ENCODE measurements at regions of chr22 and their contacts with region 1.

Region 1: GRCh38 chr22:24244101-24244787 is 638 bp downstream of the GGT5 start:
- DNase-seq: peak in 1 of 2 donors; percentile 23
- ATAC-seq: no peak

Region 2: GRCh38 chr22:24189249-24190158 is 54.7 kb before region 1 on chr22:
- intact Hi-C with region 1: loop called in 1 of 2 experiments (anchors 10 kb)
- DNase-seq: peak in 1 of 2 donors; percentile 78
- ATAC-seq: peak; percentile 92

Region 3: DNA sequence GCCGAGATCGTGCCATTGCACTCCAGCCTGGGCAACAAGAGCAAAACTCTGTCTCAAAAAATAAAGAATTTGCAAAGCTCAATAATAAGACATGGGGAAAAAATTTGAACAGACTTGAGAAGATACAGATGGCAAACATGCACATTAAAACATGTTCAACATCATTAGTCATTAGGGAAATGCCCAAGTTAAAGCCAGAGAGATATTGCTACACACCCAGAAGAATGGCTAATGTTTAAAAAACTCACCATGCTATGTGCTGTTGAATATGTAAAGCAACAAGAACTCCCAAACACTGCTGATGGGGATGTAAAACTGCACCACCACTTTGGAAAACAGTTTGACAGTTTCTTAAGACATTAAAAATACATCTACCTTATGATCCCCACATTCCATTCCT is 336.0 kb after region 1 on chr22:
- intact Hi-C with region 1: no loop called
- DNase-seq: no peak
- ATAC-seq: no peak

Measured in left colon (tissue), 2 donors.